Heart right ventricle (tissue), 16 donors: ENCODE measurements at regions of chr5 and their contacts with region 1.

Region 1: GRCh38 chr5:169302491-169303118 is 1.7 kb upstream of the SLIT3 start:
- DNase-seq: peak; percentile 61 to 64
- ATAC-seq: peak; percentile 31 to 69 (median 48)
- H3K4me3 ChIP-seq: no peak overlapping the region
- H3K27ac ChIP-seq: no peak overlapping the region
- H3K4me1 ChIP-seq: peaks cover 0 to 22% (median 7%) of the 10 kb centered on the region in 9 donors
- H3K27me3 ChIP-seq: peaks cover 0 to 76% (median 63%) of the 10 kb centered on the region in 7 donors
- CTCF ChIP-seq: peak; percentile 67 to 93 (median 89)

Region 2: GRCh38 chr5:168679515-168679920 is 623.1 kb before region 1 on chr5:
- intact Hi-C with region 1: loop called in 7 of 10 experiments (anchors 2 to 10 kb)
- DNase-seq: peak; percentile 49 to 72
- ATAC-seq: peak; percentile 22 to 67 (median 52)
- H3K4me3 ChIP-seq: no peak overlapping the region
- H3K27ac ChIP-seq: no peak overlapping the region
- H3K4me1 ChIP-seq: peaks cover 0 to 42% (median 26%) of the 10 kb centered on the region in 9 donors
- H3K27me3 ChIP-seq: no peaks in the 10 kb centered on the region
- CTCF ChIP-seq: peak; percentile 86 to 95 (median 90)

Region 3: DNA sequence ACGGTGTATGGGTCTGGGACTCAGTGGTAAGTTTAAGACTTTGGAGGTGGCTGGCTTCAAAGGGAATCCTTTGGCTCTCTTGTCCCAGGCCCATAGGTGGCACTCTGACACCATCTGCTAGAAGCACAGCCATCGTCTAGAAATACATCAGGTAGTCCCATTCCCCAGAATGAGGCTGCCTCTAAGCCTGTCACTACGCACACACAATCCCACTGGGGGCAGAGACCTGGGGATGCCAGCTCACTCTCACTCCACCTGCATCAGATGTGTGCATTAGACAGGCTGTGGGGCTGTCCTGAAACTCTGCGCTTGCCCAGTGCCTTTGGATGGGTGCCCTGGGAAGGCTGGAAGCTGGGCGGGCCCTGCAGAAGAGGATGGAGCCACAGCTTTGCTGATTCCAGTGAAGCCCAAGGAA is 595.9 kb before region 1 on chr5:
- intact Hi-C with region 1: loop called in 1 of 10 experiments (anchors 10 kb)
- DNase-seq: peak in 1 of 2 donors; percentile 53
- ATAC-seq: peak; percentile 49 to 86 (median 68)
- H3K4me3 ChIP-seq: no peak overlapping the region
- H3K27ac ChIP-seq: no peak overlapping the region
- H3K4me1 ChIP-seq: no peaks in the 10 kb centered on the region
- H3K27me3 ChIP-seq: no peaks in the 10 kb centered on the region
- CTCF ChIP-seq: peak; percentile 27 to 76 (median 59)

Region 4: DNA sequence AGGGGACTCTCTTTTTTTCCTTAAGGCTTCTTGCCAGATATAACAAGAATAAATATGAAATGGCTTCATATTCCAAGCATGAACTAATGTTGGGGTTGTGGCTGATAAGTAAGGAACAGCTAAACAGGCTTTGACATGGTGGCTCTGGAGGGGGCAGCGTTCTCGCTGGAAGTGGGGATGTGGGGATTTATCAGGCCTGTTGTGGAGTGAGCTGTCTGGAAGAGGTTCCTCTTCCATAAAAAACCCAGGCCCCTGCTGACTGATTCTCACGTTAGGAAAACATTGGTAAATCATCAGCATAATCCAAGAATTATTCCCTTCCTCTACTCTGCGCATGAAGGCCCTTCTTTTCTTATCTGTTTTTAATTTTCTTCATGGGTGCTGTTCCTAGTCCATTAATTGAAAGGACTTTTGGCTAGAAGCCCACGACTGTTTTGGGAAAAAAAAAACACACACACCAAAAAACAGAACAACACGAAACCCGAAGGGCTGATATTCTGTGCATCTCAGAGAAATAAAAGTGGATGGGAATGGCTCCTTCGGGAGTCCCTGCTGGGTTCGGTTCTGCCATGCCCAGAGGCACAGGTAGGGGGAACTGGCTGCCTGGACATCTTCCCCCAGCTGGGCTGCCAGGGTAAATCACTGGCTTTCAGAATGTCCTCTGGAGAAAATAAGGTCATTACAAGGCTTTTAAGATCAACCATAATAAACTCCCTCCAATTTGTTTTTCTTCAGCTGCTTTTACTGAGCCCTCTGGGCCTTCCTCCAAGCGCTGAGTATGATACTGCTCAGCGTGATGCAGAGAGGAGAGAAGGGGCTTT is 298.7 kb before region 1 on chr5:
- intact Hi-C with region 1: loop called in 2 of 10 experiments (anchors 5 to 10 kb)
- DNase-seq: no peak
- ATAC-seq: peak in 6 of 8 donors; percentile 33 to 55 (median 42)
- H3K4me3 ChIP-seq: no peak overlapping the region
- H3K27ac ChIP-seq: peak overlapping the region in 5 of 10 donors; percentile 4 to 53 (median 32)
- H3K4me1 ChIP-seq: peaks cover 0 to 18% (median 5%) of the 10 kb centered on the region in 9 donors
- H3K27me3 ChIP-seq: peaks cover 0 to 9% (median 0%) of the 10 kb centered on the region in 7 donors
- CTCF ChIP-seq: peak in 6 of 9 donors; percentile 26 to 36 (median 32)

Region 5: DNA sequence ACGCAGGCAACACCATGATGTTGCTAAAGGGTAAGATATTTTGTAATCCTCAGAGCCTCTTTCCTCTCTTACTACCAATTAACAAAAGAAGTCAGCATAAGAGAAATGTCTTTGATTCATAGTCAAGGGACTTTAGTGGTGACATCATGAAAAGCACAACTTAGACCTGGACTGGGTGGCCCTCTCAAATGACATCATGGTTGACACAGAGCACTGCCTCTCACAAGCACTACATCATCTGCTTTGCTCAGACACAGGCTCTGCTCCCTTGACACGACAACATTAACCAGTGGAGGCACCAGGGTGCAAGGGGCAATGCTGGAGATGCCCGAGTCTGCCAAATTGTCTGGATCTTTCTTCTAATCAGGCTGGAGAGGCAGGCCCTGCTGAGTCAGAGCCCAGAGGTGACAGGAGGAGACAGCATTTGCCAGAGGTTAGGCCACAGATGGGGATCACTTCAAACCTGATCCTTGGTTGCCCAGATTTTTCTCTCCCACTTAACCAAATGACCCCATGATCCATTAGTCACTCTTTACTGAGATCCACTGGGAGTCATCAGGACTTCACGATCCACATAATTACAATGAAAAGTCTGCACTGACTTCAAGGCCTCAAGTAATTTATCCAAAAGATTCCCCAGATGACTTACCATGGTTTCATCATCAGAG is 176.1 kb before region 1 on chr5:
- intact Hi-C with region 1: loop called in 3 of 10 experiments (anchors 10 kb)
- DNase-seq: no peak
- ATAC-seq: peak in 2 of 8 donors; percentile 23 to 48
- H3K4me3 ChIP-seq: no peak overlapping the region
- H3K27ac ChIP-seq: peak overlapping the region in 1 of 10 donors; percentile 6
- H3K4me1 ChIP-seq: peaks cover 0 to 12% (median 3%) of the 10 kb centered on the region in 9 donors
- H3K27me3 ChIP-seq: no peaks in the 10 kb centered on the region
- CTCF ChIP-seq: no peak

Region 6: GRCh38 chr5:169339869-169340268 is 37.3 kb after region 1 on chr5:
- intact Hi-C with region 1: no loop called
- DNase-seq: no peak
- ATAC-seq: no peak
- H3K4me3 ChIP-seq: no peak overlapping the region
- H3K27ac ChIP-seq: no peak overlapping the region
- H3K4me1 ChIP-seq: no peaks in the 10 kb centered on the region
- H3K27me3 ChIP-seq: peaks cover 0 to 43% (median 8%) of the 10 kb centered on the region in 7 donors
- CTCF ChIP-seq: no peak

Region 7: DNA sequence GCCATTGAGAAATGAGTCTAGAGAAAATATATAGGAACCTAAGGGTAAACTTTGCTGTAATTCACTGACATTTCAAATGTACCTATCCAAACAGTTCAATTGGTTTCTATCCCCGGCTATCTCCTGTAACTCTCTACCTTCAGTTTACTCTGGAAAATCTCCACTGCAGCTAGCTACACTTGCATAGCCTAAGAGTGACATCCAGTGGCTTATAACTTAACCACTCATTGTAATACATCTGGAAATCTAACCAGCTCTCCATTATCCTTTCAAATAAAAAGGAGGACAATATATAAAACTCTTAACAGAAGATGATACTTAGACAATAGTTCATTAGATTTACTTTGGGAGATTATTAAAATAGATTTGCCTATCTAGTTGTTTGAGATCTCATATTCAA is 245.7 kb after region 1 on chr5:
- intact Hi-C with region 1: loop called in 2 of 10 experiments (anchors 10 kb)
- DNase-seq: no peak
- ATAC-seq: peak in 6 of 8 donors; percentile 52 to 83 (median 70)
- H3K4me3 ChIP-seq: no peak overlapping the region
- H3K27ac ChIP-seq: no peak overlapping the region
- H3K4me1 ChIP-seq: peaks cover 0 to 9% (median 0%) of the 10 kb centered on the region in 9 donors
- H3K27me3 ChIP-seq: peaks cover 0 to 38% (median 22%) of the 10 kb centered on the region in 7 donors
- CTCF ChIP-seq: peak in 8 of 9 donors; percentile 21 to 70 (median 52)